Gastrocnemius medialis (tissue), 4 donors: ENCODE measurements at regions of chr3 and their contacts with region 1.

Region 1: DNA sequence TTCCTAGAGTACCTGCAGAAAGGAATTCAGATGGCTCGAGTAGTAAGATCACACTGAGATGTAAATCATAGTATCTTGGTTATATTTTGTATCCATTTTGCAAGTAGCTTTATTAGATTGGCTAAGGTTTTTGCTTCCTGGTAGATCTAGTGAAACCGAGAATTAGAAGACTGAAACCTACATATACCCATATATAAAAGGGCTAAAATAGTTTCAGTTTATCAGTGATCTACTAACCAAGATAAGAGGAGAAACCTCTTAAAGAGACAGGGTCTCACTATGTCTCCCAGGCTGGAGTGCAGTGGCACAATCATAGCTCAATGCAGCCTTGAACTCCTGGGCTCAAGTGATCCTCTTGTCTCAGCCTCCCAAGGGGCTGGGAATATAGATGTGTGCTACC is 135.3 kb downstream of the PCCB start:
- DNase-seq: no peak
- ATAC-seq: no peak
- H3K4me3 ChIP-seq: no peak overlapping the region
- H3K27ac ChIP-seq: no peak overlapping the region
- H3K4me1 ChIP-seq: no peaks in the 10 kb centered on the region
- H3K27me3 ChIP-seq: no peaks in the 10 kb centered on the region
- CTCF ChIP-seq: no peak
- POLR2A ChIP-seq: no peak

Region 2: DNA sequence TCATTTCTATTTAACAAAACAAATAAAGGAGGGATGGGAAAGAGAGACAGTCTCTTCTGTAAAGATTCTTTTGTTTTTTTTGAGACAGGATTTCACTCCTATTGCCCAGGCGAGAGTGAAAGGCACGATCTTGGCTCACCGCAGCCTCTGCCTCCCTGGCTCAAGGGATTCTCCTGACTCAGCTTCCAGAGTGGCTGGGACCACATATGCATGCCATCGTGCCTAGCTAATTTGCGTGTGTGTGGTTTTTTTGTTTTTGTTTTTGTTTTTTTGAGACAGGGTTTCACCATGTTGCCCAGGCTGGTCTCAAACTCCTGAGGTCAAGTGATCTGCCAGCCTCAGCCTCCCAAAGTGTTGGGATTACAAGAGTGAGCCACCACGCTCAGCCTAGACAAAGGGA is 343.5 kb after region 1 on chr3:
- in situ Hi-C with region 1: loop called in 1 of 4 experiments (anchors 25 kb)
- intact Hi-C with region 1: no loop called
- DNase-seq: no peak
- ATAC-seq: no peak
- H3K4me3 ChIP-seq: peak overlapping the region in 1 of 4 donors; percentile 12
- H3K27ac ChIP-seq: no peak overlapping the region
- H3K4me1 ChIP-seq: peaks cover 34 to 66% of the 10 kb centered on the region in 2 donors
- H3K27me3 ChIP-seq: no peaks in the 10 kb centered on the region
- CTCF ChIP-seq: no peak
- POLR2A ChIP-seq: no peak

Region 3: DNA sequence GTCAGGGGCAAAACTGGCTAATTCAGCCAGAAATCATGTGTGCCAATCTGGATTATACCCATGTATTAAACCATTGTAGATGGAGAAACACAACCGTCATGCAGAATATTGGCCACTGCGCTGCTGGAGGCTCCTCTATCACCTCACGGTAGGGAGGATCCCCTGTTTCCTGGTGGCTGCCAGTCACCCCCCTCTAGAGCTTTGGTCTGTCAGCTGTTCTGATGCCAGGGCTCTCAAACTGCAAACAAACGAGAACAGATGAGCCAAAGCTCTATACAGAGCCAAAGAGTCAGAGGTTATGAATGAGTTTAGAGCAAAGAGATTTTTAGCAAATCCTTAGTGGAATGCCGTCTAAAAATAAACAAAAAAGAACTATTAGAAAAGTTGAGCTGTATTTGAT is 634.9 kb after region 1 on chr3:
- in situ Hi-C with region 1: loop called (anchors 10 to 25 kb)
- intact Hi-C with region 1: no loop called
- DNase-seq: no peak
- ATAC-seq: no peak
- H3K4me3 ChIP-seq: no peak overlapping the region
- H3K27ac ChIP-seq: no peak overlapping the region
- H3K4me1 ChIP-seq: no peaks in the 10 kb centered on the region
- H3K27me3 ChIP-seq: no peaks in the 10 kb centered on the region
- CTCF ChIP-seq: no peak
- POLR2A ChIP-seq: no peak